ENCODE measurements at regions of chr16 and their contacts with region 1.

Region 1: GRCh38 chr16:27455700-27456099 is 53.7 kb downstream of the IL21R start:
- DNase-seq: no peak
- ATAC-seq: no peak
- H3K4me3 ChIP-seq: no peak overlapping the region
- H3K27ac ChIP-seq: no peak overlapping the region
- H3K4me1 ChIP-seq: no peaks in the 10 kb centered on the region
- H3K27me3 ChIP-seq: no peaks in the 10 kb centered on the region
- CTCF ChIP-seq: no peak

Region 2: DNA sequence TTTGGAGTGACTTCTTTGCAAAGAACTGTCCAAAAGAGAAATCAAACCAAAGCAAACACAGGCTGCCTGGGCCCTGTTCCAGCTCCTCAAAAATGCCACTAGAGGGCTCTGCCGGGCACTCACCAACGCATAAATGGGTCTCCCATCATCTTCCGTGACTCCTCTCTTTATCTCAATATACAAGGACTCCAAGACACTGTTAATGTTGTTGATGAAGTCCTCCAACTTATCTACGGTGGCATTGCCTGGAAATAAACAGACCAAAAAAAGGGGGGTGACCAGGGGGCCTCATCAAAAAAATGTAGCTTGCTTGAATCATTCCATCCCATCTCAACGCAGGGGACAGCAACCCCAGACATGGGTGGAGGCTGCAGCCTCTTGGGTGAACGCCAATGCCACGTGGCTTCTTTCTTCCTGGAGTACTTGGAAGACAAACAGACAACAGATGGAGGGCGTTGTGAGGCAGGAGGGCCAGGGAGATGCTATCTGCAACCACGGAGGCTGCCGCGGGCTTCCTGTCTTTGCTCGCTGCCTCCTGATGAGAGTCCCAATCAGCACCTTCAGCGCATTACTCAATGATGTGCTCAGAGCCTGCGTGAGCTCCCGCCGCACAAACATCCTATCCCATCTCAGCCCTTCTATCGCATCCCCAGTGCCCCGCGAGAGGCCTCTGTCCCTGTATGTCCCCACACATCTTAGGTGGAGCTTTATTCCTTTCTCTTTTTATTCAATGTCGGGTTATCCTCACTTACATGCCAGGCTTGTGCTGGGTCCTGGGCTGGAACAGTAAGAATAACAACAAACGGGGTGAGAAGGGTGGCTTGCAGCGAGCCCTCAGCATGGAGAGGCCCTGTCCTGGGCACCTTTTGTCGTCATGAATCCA is 220.4 kb before region 1 on chr16:
- CTCF ChIA-PET with region 1: no interaction called
- POLR2A ChIA-PET with region 1: no interaction called
- in situ Hi-C with region 1: no loop called
- intact Hi-C with region 1: loop called (anchors 5 kb)
- DNase-seq: no peak
- ATAC-seq: peak; percentile 90
- H3K4me3 ChIP-seq: no peak overlapping the region
- H3K27ac ChIP-seq: no peak overlapping the region
- H3K4me1 ChIP-seq: no peaks in the 10 kb centered on the region
- H3K27me3 ChIP-seq: no peaks in the 10 kb centered on the region
- CTCF ChIP-seq: peak; percentile 94

Region 3: DNA sequence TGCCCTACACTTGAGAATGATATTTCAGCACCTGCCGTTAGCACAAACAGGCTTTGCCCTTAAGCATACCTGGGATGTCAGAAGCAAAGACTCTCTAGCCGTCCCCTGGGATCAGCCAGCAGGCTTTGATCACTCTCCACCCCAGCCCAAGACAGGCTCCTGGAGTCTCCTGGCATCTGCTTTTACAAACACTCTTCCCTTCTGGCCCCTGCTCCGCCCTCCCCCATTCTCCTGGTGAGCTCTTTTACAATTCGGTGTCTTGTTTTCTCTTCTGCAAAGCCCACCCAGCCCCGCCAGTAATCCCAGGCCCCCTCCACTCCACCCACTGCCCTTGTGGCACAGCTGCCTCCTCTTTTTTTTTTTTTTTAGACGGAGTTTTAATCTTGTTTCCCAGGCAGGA is 144.7 kb after region 1 on chr16:
- CTCF ChIA-PET with region 1: no interaction called
- POLR2A ChIA-PET with region 1: interaction called, 16 read pairs
- in situ Hi-C with region 1: no loop called
- intact Hi-C with region 1: no loop called
- DNase-seq: no peak
- ATAC-seq: no peak
- H3K4me3 ChIP-seq: no peak overlapping the region
- H3K27ac ChIP-seq: no peak overlapping the region
- H3K4me1 ChIP-seq: no peaks in the 10 kb centered on the region
- H3K27me3 ChIP-seq: no peaks in the 10 kb centered on the region
- CTCF ChIP-seq: no peak

Measured in Panc1 (cell line).